Ascending aorta (tissue), 2 donors: ENCODE measurements at regions of chr6 and their contacts with region 1.

Region 1: GRCh38 chr6:70884074-70884983 is 72.5 kb downstream of the B3GAT2 start:
- DNase-seq: no peak
- H3K4me3 ChIP-seq: no peak overlapping the region
- H3K27ac ChIP-seq: no peak overlapping the region
- H3K4me1 ChIP-seq: no peaks in the 10 kb centered on the region
- H3K27me3 ChIP-seq: no peaks in the 10 kb centered on the region
- CTCF ChIP-seq: peak; percentile 61 to 87 (median 72)

Region 2: DNA sequence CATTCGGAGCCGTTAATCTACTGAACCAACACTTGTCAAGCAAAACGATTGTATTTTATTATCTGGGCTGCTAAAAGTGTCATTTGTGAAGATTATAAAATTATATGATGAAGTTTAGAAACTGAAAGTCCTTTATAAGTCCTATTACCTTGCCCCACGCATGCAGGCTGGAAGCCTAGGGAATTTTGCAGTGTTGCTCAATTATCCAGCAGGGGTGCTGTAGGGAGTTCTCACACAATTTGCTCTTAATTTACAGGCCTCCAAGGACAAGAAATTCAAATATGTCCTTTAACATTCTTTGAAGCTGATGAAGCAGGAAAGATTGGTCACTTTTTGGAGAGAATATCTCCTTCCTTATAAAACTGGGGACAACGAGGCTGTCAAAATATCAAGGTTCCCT is 1456.4 kb before region 1 on chr6:
- intact Hi-C with region 1: no loop called
- DNase-seq: no peak
- H3K4me3 ChIP-seq: no peak overlapping the region
- H3K27ac ChIP-seq: no peak overlapping the region
- H3K4me1 ChIP-seq: no peaks in the 10 kb centered on the region
- H3K27me3 ChIP-seq: no peaks in the 10 kb centered on the region
- CTCF ChIP-seq: no peak

Region 3: DNA sequence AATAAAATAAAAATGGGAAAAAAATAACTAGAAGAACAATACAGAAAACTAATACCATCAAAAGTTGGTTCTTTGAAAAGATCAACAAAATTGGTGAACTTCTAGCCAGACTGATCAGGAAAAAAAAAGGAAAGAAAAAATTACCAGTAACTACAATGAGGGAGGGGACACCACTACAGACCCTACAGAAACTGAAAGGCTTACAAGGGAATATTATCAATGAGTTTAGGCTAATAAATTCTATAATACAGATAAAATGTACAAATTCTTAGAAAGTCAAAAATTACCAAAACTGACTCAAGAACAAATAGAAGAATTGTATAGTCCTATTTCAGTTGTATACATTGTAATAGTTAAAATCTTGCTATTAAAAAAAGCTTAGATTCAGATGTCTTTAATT is 876.1 kb before region 1 on chr6:
- intact Hi-C with region 1: no loop called
- DNase-seq: no peak
- H3K4me3 ChIP-seq: no peak overlapping the region
- H3K27ac ChIP-seq: no peak overlapping the region
- H3K4me1 ChIP-seq: no peaks in the 10 kb centered on the region
- H3K27me3 ChIP-seq: no peaks in the 10 kb centered on the region
- CTCF ChIP-seq: no peak

Region 4: GRCh38 chr6:70221025-70221714 is 663.2 kb before region 1 on chr6:
- intact Hi-C with region 1: loop called (anchors 5 kb)
- DNase-seq: no peak
- H3K4me3 ChIP-seq: no peak overlapping the region
- H3K27ac ChIP-seq: no peak overlapping the region
- H3K4me1 ChIP-seq: no peaks in the 10 kb centered on the region
- H3K27me3 ChIP-seq: no peaks in the 10 kb centered on the region
- CTCF ChIP-seq: peak; percentile 23 to 57 (median 55)

Region 5: GRCh38 chr6:70547313-70547712 is 337.0 kb before region 1 on chr6:
- intact Hi-C with region 1: loop called (anchors 10 kb)
- DNase-seq: no peak
- H3K4me3 ChIP-seq: no peak overlapping the region
- H3K27ac ChIP-seq: no peak overlapping the region
- H3K4me1 ChIP-seq: no peaks in the 10 kb centered on the region
- H3K27me3 ChIP-seq: no peaks in the 10 kb centered on the region
- CTCF ChIP-seq: peak in 2 of 3 experiments; percentile 34 to 36

Region 6: DNA sequence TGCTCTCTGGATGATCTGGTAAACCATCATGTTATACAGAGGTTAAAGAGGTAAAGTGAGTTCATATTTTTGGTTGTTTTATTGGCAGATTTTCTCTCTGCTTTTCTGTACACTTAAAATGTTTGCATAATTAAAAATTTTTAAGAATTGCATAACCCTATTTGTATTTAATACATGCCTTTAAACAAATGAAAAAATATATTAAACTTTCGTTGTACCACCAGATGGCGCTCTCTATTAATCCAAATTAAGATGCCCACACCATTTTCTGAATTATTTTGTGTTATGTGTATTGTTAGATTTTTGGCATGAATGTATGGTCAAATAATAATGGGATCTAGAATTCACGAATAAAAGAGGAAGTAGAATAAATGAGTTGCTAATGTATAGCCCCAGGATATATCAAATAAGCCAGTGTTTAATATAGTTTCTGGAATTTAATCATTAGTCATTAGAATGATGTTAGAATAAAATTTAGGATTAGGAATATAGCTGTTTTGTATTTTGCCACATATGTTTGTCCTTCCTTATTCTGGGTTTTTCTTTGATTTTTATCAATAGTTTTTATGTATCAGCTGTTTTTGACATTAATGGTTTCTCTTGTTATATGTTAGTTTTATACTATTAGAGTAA is 177.7 kb before region 1 on chr6:
- intact Hi-C with region 1: loop called (anchors 1 kb)
- DNase-seq: no peak
- H3K4me3 ChIP-seq: no peak overlapping the region
- H3K27ac ChIP-seq: no peak overlapping the region
- H3K4me1 ChIP-seq: no peaks in the 10 kb centered on the region
- H3K27me3 ChIP-seq: no peaks in the 10 kb centered on the region
- CTCF ChIP-seq: peak; percentile 6 to 68 (median 50)

Region 7: GRCh38 chr6:71091173-71091572 is 206.8 kb after region 1 on chr6:
- intact Hi-C with region 1: no loop called
- DNase-seq: no peak
- H3K4me3 ChIP-seq: no peak overlapping the region
- H3K27ac ChIP-seq: no peak overlapping the region
- H3K4me1 ChIP-seq: no peaks in the 10 kb centered on the region
- H3K27me3 ChIP-seq: no peaks in the 10 kb centered on the region
- CTCF ChIP-seq: no peak